IMR-90 (cell line): ENCODE measurements at regions of chr9 and their contacts with region 1.

Region 1: GRCh38 chr9:38047301-38048251 is 21.5 kb downstream of the SHB start:
- DNase-seq: peak; percentile 95
- ATAC-seq: peak; percentile 72
- H3K4me3 ChIP-seq: peak overlapping the region; percentile 20; the same call in 1 of the 2 replicates
- H3K27ac ChIP-seq: peak overlapping the region; percentile 82
- H3K4me1 ChIP-seq: peaks cover 25% of the 10 kb centered on the region
- H3K27me3 ChIP-seq: no peaks in the 10 kb centered on the region
- CTCF ChIP-seq: no peak
- POLR2A ChIP-seq: no peak; the same call in 1 of the 2 replicates
- RAD21 ChIP-seq: peak; percentile 21; the same call in 1 of the 2 replicates

Region 2: GRCh38 chr9:38026021-38026809 is 21.4 kb before region 1 on chr9:
- CTCF ChIA-PET with region 1: no interaction called
- POLR2A ChIA-PET with region 1: no interaction called
- dilution Hi-C with region 1: no loop called
- in situ Hi-C with region 1: no loop called
- intact Hi-C with region 1: loop called (anchors 2 kb)
- DNase-seq: peak; percentile 98
- ATAC-seq: peak; percentile 77
- H3K4me3 ChIP-seq: no peak overlapping the region
- H3K27ac ChIP-seq: peak overlapping the region; percentile 96
- H3K4me1 ChIP-seq: peaks cover 59% of the 10 kb centered on the region
- H3K27me3 ChIP-seq: no peaks in the 10 kb centered on the region
- CTCF ChIP-seq: no peak
- POLR2A ChIP-seq: no peak; the same call in 1 of the 2 replicates
- RAD21 ChIP-seq: peak; percentile 28

Region 3: DNA sequence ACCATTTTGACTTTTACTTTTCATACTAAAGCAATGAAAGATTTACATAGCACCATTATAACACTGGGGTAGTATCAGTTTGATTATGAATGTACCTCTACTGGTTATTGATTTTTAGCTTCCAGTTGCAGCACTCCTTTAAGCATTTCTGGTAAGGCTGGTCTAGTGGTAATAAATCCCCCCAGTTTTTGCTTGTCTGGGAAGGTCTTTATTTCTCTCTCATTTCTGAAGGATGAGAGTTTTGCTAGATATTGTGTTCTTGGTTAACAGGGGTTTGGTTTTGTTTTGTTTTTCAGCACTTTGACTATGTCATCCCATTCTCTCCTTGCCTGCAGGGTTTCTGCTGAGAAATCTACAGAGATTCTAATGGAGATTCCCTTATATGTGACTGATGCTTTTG is 403.6 kb after region 1 on chr9:
- CTCF ChIA-PET with region 1: no interaction called
- POLR2A ChIA-PET with region 1: no interaction called
- dilution Hi-C with region 1: no loop called
- in situ Hi-C with region 1: no loop called
- intact Hi-C with region 1: no loop called
- DNase-seq: no peak
- ATAC-seq: no peak
- H3K4me3 ChIP-seq: no peak overlapping the region
- H3K27ac ChIP-seq: no peak overlapping the region
- H3K4me1 ChIP-seq: no peaks in the 10 kb centered on the region
- H3K27me3 ChIP-seq: peaks cover 7% of the 10 kb centered on the region
- CTCF ChIP-seq: no peak
- POLR2A ChIP-seq: no peak
- RAD21 ChIP-seq: no peak